SK-N-SH (cell line): ENCODE measurements at regions of chr9 and their contacts with region 1.

Region 1: GRCh38 chr9:98255578-98256296 is at the start of gene TBC1D2:
- DNase-seq: peak; percentile 98
- H3K4me3 ChIP-seq: peak within 1 kb of the TSS; percentile 81 to 85
- H3K27ac ChIP-seq: peak within 1 kb of the TSS; percentile 92 to 98
- H3K4me1 ChIP-seq: peaks cover 7 to 11% of the 10 kb centered on the region in 2 experiments
- H3K27me3 ChIP-seq: no peaks in the 10 kb centered on the region
- CTCF ChIP-seq: peak; percentile 30; the same call in 1 of the 2 replicates
- EP300 ChIP-seq: no peak
- RAD21 ChIP-seq: no peak
- polyA plus RNA-seq, gene TBC1D2: 5.1 and 5.6 TPM in 2 replicates

Region 2: GRCh38 chr9:98056269-98057137 is 199.2 kb before region 1 on chr9 and contains the start of gene NANS:
- CTCF ChIA-PET with region 1: interaction called, 3 read pairs
- POLR2A ChIA-PET with region 1: interaction called, 17 read pairs
- DNase-seq: peak; percentile 98
- H3K4me3 ChIP-seq: peak within 1 kb of the TSS; percentile 67 to 96
- H3K27ac ChIP-seq: peak within 1 kb of the TSS; percentile 81 to 85
- H3K4me1 ChIP-seq: peaks cover 3 to 12% of the 10 kb centered on the region in 2 experiments; a peak in 2 of 4 replicates
- H3K27me3 ChIP-seq: no peaks in the 10 kb centered on the region
- CTCF ChIP-seq: peak; percentile 18; the same call in 1 of the 2 replicates
- EP300 ChIP-seq: peak in 1 of 2 experiments; percentile 41; a peak in 1 of 4 replicates
- RAD21 ChIP-seq: peak; percentile 33
- polyA plus RNA-seq, gene NANS: 53.5 and 61.3 TPM in 2 replicates

Region 3: DNA sequence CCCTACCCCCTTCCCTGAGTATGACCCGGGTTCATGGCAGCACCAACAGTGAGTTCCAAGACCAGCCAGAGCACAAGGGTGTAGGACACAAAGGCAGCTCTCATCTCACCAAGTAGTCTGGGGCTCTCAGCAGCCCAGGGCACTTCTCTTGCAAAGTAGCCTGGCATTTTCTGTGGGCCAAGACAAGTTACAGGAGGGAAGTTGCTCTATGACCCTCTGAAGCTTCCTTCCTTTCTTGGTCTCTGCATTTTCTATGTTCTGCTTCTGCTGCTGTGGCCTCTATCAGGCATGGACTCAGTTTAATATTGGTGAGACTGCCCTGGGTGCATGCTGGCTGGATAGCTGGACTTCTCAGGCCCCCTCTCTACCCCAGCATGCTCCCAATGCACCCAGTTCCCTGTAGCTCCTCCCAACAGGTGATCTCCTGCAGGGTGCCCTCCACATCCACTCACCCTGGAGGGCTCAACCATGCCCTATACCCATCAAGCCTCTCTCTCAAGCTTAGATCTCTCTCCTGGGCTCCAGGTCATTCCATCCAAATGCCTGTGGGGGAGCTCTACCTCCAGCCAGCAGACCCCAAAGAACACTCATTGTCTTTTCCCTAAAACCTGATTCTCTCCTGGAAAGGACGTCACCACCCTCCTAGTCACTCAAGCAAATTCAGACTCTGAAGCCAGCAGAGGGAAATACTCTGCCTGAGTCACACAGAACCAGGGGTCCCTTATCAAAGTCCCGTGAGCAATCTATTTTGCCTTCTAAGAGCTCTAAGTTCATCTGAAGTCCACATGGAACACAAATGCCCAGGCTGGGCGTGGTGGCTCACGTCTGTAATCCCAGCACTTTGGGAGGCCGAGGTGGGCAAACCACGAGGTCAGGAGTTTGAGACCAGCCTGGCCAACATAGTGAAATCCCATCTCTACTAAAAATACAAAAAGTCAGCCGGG is 14.1 kb before region 1 on chr9:
- CTCF ChIA-PET with region 1: interaction called, 11 read pairs
- POLR2A ChIA-PET with region 1: no interaction called
- DNase-seq: no peak
- H3K4me3 ChIP-seq: no peak overlapping the region
- H3K27ac ChIP-seq: no peak overlapping the region
- H3K4me1 ChIP-seq: no peaks in the 10 kb centered on the region
- H3K27me3 ChIP-seq: no peaks in the 10 kb centered on the region
- CTCF ChIP-seq: no peak
- EP300 ChIP-seq: no peak
- RAD21 ChIP-seq: no peak

Region 4: DNA sequence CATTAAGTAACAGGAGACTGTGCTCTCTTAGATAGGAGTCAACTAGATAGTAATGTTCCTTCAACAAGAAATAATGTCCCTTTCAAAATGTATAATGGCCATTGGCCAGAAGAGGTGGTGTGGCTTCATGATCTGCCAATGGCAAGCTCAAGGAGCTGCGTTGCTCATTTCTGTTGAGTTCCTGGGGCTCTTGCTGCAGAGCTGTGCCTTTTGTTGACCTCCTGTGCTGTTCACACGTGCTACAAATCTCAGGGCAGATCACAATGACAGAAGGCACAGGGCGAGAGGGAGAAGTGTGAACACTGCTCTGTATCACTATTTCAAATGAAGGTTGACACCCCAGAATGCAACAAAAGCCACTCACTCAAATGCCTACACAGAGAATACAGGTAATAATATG is 15.7 kb after region 1 on chr9:
- CTCF ChIA-PET with region 1: no interaction called
- POLR2A ChIA-PET with region 1: no interaction called
- DNase-seq: no peak
- H3K4me3 ChIP-seq: no peak overlapping the region
- H3K27ac ChIP-seq: no peak overlapping the region
- H3K4me1 ChIP-seq: no peaks in the 10 kb centered on the region
- H3K27me3 ChIP-seq: peaks cover 2% of the 10 kb centered on the region; the same call in 1 of the 2 replicates
- CTCF ChIP-seq: no peak
- EP300 ChIP-seq: no peak
- RAD21 ChIP-seq: no peak

Region 5: GRCh38 chr9:98287383-98287782 is 31.6 kb after region 1 on chr9:
- CTCF ChIA-PET with region 1: no interaction called
- POLR2A ChIA-PET with region 1: interaction called, 10 read pairs
- DNase-seq: peak; percentile 44
- H3K4me3 ChIP-seq: no peak overlapping the region
- H3K27ac ChIP-seq: no peak overlapping the region
- H3K4me1 ChIP-seq: peaks cover 0 to 5% of the 10 kb centered on the region in 2 experiments; a peak in 1 of 4 replicates
- H3K27me3 ChIP-seq: peaks cover 9% of the 10 kb centered on the region; the same call in 1 of the 2 replicates
- CTCF ChIP-seq: no peak
- EP300 ChIP-seq: no peak
- RAD21 ChIP-seq: no peak

Region 6: DNA sequence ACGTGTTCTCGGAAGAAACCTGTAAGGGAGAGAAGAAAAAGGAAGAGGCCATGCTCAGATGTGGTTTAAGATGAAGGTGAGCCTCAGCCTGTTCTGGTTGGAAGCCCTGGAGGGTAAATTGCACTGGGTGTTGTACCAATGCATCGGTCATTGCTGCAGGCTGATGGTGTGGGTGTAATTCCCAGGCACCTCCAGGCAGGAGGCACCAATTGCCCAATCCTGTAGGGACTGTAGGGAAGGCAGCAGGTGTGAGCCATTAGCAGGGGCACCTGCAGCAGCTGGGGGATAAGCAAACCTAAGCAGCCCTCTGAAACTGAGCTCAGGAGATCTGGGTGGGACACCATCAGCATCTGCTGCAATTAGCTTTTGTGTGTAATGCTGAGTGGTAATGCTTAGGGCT is 189.8 kb after region 1 on chr9:
- CTCF ChIA-PET with region 1: no interaction called
- POLR2A ChIA-PET with region 1: no interaction called
- DNase-seq: no peak
- H3K4me3 ChIP-seq: no peak overlapping the region
- H3K27ac ChIP-seq: no peak overlapping the region
- H3K4me1 ChIP-seq: no peaks in the 10 kb centered on the region
- H3K27me3 ChIP-seq: no peaks in the 10 kb centered on the region; the same call in 1 of the 2 replicates
- CTCF ChIP-seq: no peak
- EP300 ChIP-seq: no peak
- RAD21 ChIP-seq: no peak